Activated CD8-positive, alpha-beta T cell treated with anti-CD3 and anti-CD28 coated beads for 36 hours (primary cell): ENCODE measurements at regions of chr14 and their contacts with region 1.

Region 1: DNA sequence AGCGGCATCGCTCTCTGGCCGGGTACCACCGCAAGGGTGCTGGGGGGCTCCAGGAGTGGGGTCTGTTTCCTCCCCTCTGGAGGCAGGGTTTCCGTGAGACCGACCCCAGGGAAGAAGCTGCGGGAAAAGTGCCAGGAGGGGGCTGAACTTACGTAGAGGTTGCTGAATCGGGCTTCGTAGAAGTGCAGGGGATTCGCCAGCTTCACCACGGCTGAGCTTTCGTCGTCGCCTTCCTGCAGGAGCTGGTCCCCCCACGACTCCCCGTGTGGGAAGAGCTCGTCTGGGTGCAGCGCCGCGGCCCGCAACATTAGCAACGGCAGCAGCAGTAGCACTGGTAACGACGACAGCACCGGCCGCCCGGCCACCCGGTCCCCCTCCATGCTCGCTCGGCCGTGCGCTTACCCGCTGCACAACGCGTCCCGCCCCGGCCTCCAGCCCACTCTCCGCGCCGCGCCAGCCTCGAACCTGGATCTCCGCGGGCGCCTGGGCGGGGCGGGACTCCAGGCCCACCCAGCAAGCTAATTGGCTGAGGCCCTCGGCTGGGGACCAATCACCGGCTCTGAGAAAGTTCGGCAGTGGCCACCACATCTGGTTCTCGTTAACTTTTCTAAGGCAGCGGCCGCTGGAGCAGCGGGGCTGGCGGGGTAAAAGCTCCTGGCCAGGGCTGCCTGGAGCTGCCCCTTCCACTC is at the start of gene NID2:
- DNase-seq: peak; percentile 66
- ATAC-seq: peak; percentile 85
- H3K4me3 Mint-ChIP-seq: peak within 1 kb of the TSS; percentile 66
- H3K27ac Mint-ChIP-seq: no peak within 1 kb of the TSS
- H3K4me1 Mint-ChIP-seq: peaks cover 24% of the 10 kb centered on the region
- H3K27me3 Mint-ChIP-seq: peaks cover 42% of the 10 kb centered on the region
- CTCF ChIP-seq: no peak
- total RNA-seq, gene NID2: 0.29 TPM in 1 of 2 experiments, not detected in the other

Region 2: DNA sequence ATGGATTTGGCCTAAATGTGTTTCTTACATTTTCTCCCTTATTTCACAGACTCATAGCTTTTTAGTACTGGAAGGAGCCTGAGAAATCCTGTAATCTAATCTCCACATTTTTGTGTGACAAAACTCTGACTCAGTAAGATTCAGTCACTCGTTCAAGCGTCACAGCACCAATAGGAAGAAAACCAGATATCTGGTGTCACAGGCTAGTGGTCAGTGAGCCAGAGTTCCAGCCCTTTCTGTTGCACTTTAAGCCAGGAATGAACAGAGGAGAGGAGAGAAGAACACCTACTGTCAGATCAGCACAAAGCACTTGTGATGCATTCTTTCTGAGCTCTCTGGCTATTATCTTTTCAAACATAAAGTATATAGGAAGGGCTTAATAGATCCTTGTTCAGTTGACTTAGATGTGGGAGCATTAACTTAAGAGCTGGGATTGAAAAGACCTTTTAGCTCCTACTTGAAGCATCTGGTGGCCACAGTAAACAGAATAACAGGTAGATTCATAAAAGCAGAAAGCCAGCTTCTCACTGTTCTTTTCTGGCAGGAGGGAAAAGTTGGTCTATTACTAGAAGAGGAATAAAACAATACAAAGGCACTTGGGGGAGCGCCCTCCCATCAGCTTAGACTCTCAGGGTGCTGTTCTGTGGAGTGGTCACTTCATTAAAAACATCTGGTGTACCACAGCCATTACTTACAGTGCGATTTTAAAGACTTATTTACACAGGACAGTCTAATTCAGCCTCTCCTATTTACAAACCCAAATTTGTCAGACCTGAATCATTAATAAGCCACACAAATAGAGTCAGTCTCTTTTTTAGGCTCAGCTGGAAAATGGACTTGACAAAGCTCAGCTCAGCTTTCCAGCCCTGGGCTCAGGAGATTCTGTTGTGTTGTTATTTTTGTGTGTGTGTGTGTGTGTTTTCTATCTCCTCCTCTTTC is 12.3 kb after region 1 on chr14:
- CTCF ChIA-PET with region 1: interaction called, 18 read pairs
- POLR2A ChIA-PET with region 1: interaction called, 3 read pairs
- intact Hi-C with region 1: no loop called
- DNase-seq: no peak
- ATAC-seq: no peak
- H3K4me3 Mint-ChIP-seq: no peak overlapping the region
- H3K27ac Mint-ChIP-seq: no peak overlapping the region
- H3K4me1 Mint-ChIP-seq: no peaks in the 10 kb centered on the region
- H3K27me3 Mint-ChIP-seq: peaks cover 2% of the 10 kb centered on the region
- CTCF ChIP-seq: no peak

Region 3: DNA sequence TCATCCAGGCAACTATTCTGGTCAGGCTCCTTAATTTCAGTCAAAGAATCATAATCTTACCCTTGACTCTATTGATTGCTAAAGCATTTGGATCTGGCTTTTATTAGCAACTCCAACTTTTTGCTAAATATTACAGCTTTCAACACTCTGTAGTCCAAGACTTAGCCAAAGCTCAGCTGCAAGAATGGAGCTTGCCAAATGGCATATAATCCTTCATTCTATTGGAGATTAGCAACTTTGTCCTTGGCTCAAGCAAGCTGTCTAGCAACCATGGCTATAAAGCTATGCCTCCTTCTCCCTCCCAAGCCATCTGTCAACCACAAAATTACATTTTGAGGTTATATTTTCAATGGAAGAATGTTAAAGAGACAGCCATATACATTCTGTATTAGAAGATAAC is 23.2 kb after region 1 on chr14:
- CTCF ChIA-PET with region 1: no interaction called
- POLR2A ChIA-PET with region 1: no interaction called
- intact Hi-C with region 1: no loop called
- DNase-seq: no peak
- ATAC-seq: no peak
- H3K4me3 Mint-ChIP-seq: no peak overlapping the region
- H3K27ac Mint-ChIP-seq: no peak overlapping the region
- H3K4me1 Mint-ChIP-seq: no peaks in the 10 kb centered on the region
- H3K27me3 Mint-ChIP-seq: peaks cover 9% of the 10 kb centered on the region
- CTCF ChIP-seq: no peak